Cardiac septum (tissue), 1 donor: ENCODE measurements at regions of chr7 and their contacts with region 1.

Region 1: DNA sequence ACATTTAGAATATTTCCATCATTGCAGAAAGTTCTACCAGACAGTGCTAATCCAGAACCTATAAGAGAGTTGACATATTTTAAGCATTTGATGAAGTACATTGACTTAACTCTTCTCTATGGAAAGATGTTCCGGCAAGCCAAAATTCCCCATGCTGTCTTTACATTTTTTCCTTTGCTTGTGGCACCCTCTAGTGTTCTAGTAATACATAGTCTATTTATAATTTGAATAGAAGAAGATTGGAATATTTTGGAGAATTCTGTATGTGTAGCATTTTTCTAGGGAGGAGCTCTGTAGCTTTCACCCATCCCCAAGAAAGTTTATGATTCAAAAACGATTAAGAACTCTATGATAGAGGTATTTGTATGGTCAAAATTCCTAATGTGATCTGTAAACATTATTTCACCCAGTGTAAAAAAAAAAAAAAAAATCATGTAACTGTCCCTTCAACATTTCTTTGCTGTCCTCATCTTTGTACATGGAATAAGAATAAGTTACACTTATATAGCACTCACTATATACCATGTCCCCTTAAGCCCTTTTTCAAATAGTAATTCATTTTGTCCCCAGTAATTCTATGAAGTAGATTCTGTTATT is 33.2 kb downstream of the NRF1 start:
- DNase-seq: no peak

Region 2: DNA sequence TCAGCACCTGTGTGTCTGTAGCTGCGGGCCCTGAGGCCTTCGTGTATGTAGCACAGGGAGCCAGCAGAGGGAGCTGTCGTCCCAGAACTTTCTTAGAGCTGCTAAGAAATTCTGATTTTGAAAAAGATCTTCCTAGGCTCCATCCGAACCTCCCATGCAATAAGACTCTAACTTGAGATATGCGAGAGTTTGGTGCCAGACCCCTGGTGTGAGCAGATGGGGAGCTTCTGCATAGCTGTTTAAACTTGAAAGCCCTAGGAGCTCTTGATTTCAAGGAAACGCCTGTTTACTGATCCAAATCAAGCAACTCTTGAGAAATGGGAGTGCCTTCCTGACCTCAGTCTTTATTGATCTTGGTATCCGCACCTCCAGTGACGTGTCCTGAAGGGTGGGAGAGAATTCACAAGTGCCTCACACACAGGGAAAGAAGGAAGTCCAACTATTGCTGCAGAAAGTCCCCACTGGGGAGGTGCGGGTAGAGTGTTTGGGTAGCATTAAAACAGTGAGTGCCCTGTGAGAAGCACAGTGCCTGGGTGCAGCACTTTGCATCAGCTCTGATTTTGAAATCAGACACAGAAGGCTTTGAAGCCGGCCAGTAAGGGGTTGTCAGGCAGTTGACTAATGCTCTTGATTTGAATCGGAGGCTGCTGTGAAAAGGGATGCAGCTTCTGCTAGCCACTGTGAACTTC is 276.9 kb before region 1 on chr7:
- intact Hi-C with region 1: loop called (anchors 10 kb)
- DNase-seq: peak; percentile 86

Region 3: GRCh38 chr7:129502376-129502776 is 142.4 kb before region 1 on chr7 and contains the start of gene SMKR1:
- intact Hi-C with region 1: loop called (anchors 10 kb)
- DNase-seq: no peak
- total RNA-seq, gene SMKR1: not detected